Transverse colon (tissue), 4 donors: ENCODE measurements at regions of chr20 and their contacts with region 1.

Region 1: DNA sequence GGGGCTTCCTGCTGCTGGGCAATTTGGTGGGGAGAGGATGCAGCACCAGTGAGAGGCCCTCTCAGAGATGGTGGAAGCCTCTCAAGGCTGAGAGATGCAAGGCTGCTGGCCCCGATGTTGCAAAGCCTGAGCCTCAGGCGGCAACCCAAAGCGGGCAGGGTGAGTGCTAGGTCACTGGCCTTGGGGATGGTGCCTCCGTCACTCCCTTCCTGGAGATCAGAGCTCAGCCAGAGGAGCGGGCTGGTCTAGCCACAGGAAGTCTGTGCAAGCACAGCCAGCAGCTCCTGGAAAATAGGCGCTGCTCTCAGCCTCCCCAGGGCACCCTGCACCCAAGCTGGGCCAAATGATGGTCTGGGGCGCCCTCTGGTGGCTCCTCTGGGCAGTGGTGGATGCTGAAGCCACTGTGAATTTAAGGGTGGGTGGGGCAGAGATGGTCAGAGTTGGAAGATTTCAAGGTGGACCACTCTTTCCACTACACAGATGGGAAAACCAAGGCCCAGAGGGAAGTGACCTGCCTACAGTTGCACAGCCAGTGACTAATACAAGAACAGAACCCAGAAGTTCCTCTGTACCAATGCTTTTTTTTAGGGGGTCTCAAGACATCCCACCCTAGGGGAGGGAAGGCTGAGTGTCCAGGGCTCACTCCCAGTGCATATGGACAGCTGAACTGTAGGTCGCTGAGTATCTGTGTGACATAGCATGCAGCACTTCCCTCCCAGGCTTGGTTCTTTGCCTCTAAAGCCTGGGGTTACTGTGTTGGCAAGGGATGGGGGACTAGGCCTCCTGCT is 20.8 kb downstream of the C20orf203 start:
- DNase-seq: peak; percentile 88
- H3K4me3 ChIP-seq: no peak overlapping the region
- H3K27ac ChIP-seq: no peak overlapping the region
- H3K4me1 ChIP-seq: peaks cover 0 to 3% (median 0%) of the 10 kb centered on the region in 4 donors
- H3K27me3 ChIP-seq: no peaks in the 10 kb centered on the region
- CTCF ChIP-seq: peak; percentile 92 to 97 (median 95)
- EP300 ChIP-seq: no peak
- POLR2A ChIP-seq: no peak

Region 2: GRCh38 chr20:32336918-32337347 is 316.0 kb before region 1 on chr20:
- in situ Hi-C with region 1: loop called in 2 of 4 experiments (anchors 25 kb)
- intact Hi-C with region 1: no loop called
- DNase-seq: no peak
- H3K4me3 ChIP-seq: no peak overlapping the region
- H3K27ac ChIP-seq: no peak overlapping the region
- H3K4me1 ChIP-seq: peaks cover 0 to 9% (median 0%) of the 10 kb centered on the region in 4 donors
- H3K27me3 ChIP-seq: no peaks in the 10 kb centered on the region
- CTCF ChIP-seq: peak; percentile 45 to 62 (median 48)
- EP300 ChIP-seq: no peak
- POLR2A ChIP-seq: no peak

Region 3: DNA sequence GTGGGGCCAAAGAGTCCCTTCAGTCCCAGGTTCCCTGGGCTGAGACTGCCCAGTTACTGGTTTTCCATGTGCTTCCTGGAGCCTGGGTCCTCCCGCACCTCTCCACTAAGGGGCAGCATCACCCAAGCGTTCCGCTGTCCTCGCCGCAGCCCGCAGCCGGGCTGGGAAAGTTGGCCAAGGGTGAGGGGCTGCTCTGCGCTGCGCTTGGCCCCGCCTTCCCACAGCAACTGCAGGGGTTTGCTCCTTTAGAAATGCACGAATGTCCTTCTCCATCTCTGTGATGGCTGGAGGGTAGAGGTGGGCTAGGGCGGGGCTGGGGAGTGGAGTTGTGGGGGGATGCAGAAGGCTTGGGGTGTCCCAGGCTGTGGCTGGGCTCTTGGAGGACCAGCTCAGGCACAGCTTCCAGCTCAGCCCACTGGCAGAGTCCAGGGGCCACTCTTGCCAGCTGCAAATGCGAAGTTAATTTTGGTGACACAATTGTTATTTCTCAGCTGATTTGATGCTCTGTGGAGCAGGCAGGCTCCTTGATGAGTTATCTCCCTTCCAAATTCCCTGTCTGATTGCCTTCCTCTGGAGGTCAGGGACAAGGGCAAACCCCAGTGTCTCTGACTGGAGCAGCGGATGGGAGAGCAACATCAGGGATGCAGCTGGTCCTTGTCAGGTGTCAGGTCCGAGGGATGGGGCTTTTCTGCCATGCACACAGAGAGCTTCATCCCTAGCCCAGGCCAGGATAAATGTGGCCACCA is 131.0 kb before region 1 on chr20:
- in situ Hi-C with region 1: loop called in 3 of 4 experiments (anchors 5 to 10 kb)
- intact Hi-C with region 1: loop called (anchors 1 kb)
- DNase-seq: peak; percentile 74
- H3K4me3 ChIP-seq: no peak overlapping the region
- H3K27ac ChIP-seq: no peak overlapping the region
- H3K4me1 ChIP-seq: peaks cover 0 to 12% (median 0%) of the 10 kb centered on the region in 4 donors
- H3K27me3 ChIP-seq: no peaks in the 10 kb centered on the region
- CTCF ChIP-seq: peak; percentile 82 to 88 (median 87)
- EP300 ChIP-seq: no peak
- POLR2A ChIP-seq: no peak

Region 4: GRCh38 chr20:32535953-32536823 is 116.7 kb before region 1 on chr20:
- in situ Hi-C with region 1: loop called in 1 of 4 experiments (anchors 5 kb)
- intact Hi-C with region 1: no loop called
- DNase-seq: peak; percentile 85
- H3K4me3 ChIP-seq: peak overlapping the region; percentile 35 to 56 (median 45)
- H3K27ac ChIP-seq: peak overlapping the region; percentile 55 to 73 (median 68)
- H3K4me1 ChIP-seq: peaks cover 15 to 39% (median 29%) of the 10 kb centered on the region in 4 donors
- H3K27me3 ChIP-seq: no peaks in the 10 kb centered on the region
- CTCF ChIP-seq: no peak
- EP300 ChIP-seq: no peak
- POLR2A ChIP-seq: peak; percentile 15

Region 5: GRCh38 chr20:32585011-32585518 is 67.9 kb before region 1 on chr20 and contains the start of gene NOL4L:
- in situ Hi-C with region 1: no loop called
- intact Hi-C with region 1: no loop called
- DNase-seq: no peak
- H3K4me3 ChIP-seq: peak within 1 kb of the TSS; percentile 53 to 65 (median 60)
- H3K27ac ChIP-seq: peak within 1 kb of the TSS; percentile 22 to 72 (median 56)
- H3K4me1 ChIP-seq: peaks cover 2 to 27% (median 15%) of the 10 kb centered on the region in 4 donors
- H3K27me3 ChIP-seq: peaks cover 56% of the 10 kb centered on the region
- CTCF ChIP-seq: no peak
- EP300 ChIP-seq: no peak
- POLR2A ChIP-seq: no peak
- total RNA-seq, gene NOL4L: 45.6 to 105 (median 85.9) TPM

Region 6: DNA sequence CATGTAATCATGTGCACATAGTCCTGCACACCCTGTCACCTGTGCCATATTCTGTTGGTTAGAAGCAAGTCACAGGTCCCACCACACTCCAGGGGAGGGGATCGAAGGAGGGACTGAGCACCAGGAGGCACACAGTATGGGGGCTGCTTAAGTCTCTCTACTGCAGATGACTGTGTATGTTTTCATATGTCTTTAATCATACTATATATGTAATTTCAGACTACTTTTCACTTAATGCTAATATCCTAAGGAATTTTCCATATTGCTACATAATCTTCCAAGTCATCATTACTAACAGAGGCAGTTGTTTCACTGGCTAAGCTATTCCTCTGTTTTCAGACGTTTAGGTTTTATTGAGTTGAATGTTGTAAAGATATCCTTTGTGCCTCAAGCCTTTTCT is 216.6 kb after region 1 on chr20:
- in situ Hi-C with region 1: no loop called
- intact Hi-C with region 1: no loop called
- DNase-seq: no peak
- H3K4me3 ChIP-seq: no peak overlapping the region
- H3K27ac ChIP-seq: no peak overlapping the region
- H3K4me1 ChIP-seq: no peaks in the 10 kb centered on the region
- H3K27me3 ChIP-seq: no peaks in the 10 kb centered on the region
- CTCF ChIP-seq: no peak
- EP300 ChIP-seq: no peak
- POLR2A ChIP-seq: no peak